ENCODE measurements at regions of chr12 and their contacts with region 1.

Region 1: DNA sequence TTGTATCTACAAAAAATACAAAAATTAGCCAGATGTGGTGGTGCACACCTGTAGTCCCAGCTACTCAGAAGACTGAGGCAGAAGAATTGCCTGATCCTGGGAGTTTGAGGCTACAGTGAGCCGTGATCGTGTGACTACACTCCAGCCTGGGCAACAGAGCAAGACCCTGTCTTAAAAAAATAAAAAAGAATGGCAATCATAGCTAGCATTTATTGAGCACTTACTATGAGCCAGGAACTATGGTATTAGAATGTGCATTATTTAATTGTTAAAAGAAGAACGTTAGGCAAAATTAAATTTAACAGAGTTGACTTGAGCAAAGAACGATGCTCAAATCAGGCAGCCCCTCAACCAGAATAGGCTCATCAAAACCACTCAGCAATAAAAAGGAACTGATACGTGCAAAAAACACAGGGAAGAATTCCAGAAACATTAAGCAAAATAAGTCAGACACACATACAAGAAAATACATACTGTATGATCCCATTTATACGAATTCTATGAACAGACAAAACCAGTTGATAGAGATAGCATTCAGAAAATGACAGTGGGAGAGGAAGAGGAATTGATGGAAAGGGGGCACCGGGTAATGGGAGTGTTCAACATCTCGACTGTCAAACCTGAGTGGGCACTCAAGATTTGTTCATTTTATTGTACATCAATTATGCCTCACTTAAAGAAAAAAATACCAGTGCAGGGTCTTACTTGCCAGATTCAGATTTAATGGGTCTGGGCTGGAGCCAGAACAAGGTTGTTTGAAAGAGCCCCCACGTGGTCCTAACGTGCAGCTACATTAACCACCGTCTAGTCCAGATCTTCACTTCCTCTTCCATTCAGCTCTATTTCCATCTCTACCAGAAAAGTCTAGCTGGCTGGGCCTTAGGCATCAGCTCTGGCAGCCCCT is 8.0 kb downstream of the SCNN1A start:
- DNase-seq: peak in 4 of 5 donors; percentile 14 to 73 (median 54)
- H3K4me3 ChIP-seq: no peak overlapping the region
- H3K4me3 Mint-ChIP-seq: peak overlapping the region in 1 of 7 donors; percentile 47
- H3K27ac ChIP-seq: no peak overlapping the region
- H3K27ac Mint-ChIP-seq: peak overlapping the region; percentile 34 to 80 (median 70)
- H3K4me1 ChIP-seq: peaks cover 21% of the 10 kb centered on the region
- H3K4me1 Mint-ChIP-seq: peaks cover 18 to 36% (median 27%) of the 10 kb centered on the region in 3 donors
- H3K27me3 ChIP-seq: no peaks in the 10 kb centered on the region
- H3K27me3 Mint-ChIP-seq: peaks cover 0 to 2% of the 10 kb centered on the region in 2 donors

Region 2: GRCh38 chr12:6323340-6323994 is 43.9 kb before region 1 on chr12:
- CTCF ChIA-PET with region 1: interaction called, 47 read pairs
- POLR2A ChIA-PET with region 1: interaction called, 3 read pairs
- DNase-seq: peak in 4 of 5 donors; percentile 28 to 67 (median 52)
- H3K4me3 ChIP-seq: peak overlapping the region; percentile 22
- H3K4me3 Mint-ChIP-seq: peak overlapping the region; percentile 63 to 88 (median 83)
- H3K27ac ChIP-seq: no peak overlapping the region
- H3K27ac Mint-ChIP-seq: peak overlapping the region; percentile 81 to 96 (median 93)
- H3K4me1 ChIP-seq: peaks cover 34% of the 10 kb centered on the region
- H3K4me1 Mint-ChIP-seq: peaks cover 50 to 58% (median 55%) of the 10 kb centered on the region in 3 donors
- H3K27me3 ChIP-seq: no peaks in the 10 kb centered on the region
- H3K27me3 Mint-ChIP-seq: no peaks in the 10 kb centered on the region

Region 3: DNA sequence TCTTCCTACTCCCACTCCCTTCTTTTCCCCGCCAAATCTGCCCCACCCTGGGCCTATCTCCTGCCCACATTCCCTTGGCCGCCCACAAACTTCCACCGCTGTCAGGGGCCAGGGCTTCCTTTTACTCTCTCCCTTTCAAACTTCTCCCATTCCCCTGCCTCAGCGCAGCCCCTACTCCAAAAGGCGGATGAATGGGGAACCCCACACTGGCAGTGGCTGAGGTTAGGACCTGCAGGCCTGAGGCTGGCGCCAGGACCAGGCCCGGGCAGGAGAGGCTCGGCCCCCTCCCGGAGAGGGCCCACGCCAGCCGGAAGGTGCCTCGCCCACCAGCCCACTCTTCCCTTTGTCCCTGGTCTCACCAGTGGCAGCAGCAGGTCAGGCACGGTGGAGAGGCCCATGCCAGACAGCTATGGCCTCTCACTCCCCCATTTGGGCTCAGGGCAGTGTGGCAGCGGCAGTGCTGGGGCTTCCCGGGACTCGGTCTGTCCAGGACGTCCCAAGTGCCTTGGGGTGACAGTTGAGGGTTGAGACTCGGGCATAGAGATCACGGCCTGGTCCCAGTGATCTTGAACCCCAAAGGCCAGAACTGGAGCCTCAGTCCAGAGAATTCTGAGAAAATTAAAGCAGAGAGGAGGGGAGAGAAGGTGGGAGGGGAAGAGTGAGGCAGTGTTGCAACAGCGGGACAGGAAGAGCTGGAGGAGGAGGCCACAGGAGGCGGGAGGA is 25.7 kb before region 1 on chr12 and contains the start of gene TNFRSF1A:
- CTCF ChIA-PET with region 1: interaction called, 106 read pairs
- POLR2A ChIA-PET with region 1: interaction called, 34 read pairs
- DNase-seq: peak in 3 of 5 donors; percentile 48 to 63 (median 58)
- H3K4me3 ChIP-seq: peak within 1 kb of the TSS; percentile 91
- H3K4me3 Mint-ChIP-seq: no peak within 1 kb of the TSS
- H3K27ac ChIP-seq: peak within 1 kb of the TSS; percentile 89
- H3K27ac Mint-ChIP-seq: peak within 1 kb of the TSS in 2 of 8 donors; percentile 94 to 97
- H3K4me1 ChIP-seq: peaks cover 71% of the 10 kb centered on the region
- H3K4me1 Mint-ChIP-seq: peaks cover 36 to 42% (median 37%) of the 10 kb centered on the region in 3 donors
- H3K27me3 ChIP-seq: no peaks in the 10 kb centered on the region
- H3K27me3 Mint-ChIP-seq: peaks cover 0 to 3% of the 10 kb centered on the region in 2 donors
- total RNA-seq, gene TNFRSF1A: 62.1 to 62.9 TPM

Measured in CD8-positive, alpha-beta memory T cell (primary cell).